GM12878 (cell line): ENCODE measurements at regions of chr14 and their contacts with region 1.

Region 1: DNA sequence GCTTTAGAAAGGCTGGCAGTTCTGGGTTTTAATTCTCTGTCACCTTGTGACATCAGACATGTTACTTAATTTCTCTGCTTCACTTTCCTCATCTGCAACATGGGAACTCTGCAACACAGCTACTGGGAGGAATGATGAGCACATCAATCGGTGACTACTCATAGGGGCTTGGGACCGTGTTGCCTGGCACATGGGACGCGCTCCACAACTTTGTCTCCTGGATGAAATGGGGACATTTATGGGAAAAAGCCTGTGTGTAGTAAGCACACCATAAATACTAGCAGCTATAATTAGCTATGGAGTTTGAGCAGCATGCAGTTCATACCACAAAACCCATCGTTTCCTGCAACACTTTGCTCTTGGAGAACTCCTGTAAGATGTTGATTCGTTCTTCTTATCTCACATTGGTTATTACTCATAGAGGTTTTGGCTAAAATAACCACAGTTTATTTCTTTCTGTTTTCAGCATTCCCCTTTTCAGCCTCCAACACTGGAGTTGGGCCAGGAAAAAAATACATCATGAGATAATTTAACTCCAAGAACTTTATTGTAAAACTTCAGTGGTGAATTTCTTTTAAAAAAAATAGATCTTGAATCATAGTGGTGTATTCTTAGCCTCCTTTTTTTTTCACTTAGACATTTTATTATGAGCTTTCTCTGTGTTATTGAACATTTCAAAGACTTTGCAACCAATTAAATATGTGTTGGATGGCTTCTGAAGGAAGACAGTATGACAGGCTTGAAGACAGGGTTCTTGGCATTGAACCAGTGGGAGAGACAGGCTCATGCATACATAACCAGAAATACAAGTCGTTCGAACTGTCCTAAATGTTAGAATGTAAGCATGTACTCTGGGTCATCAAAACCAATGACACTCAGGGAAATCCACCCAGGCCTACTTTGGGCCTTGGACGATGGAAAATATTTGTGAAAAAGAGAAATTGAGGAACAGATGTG is 72.7 kb downstream of the RIN3 start:
- DNase-seq: peak; percentile 76
- ATAC-seq: peak; percentile 36
- H3K4me3 ChIP-seq: no peak overlapping the region
- H3K27ac ChIP-seq: peak overlapping the region; percentile 32; the same call in 1 of the 2 replicates
- H3K4me1 ChIP-seq: peaks cover 71% of the 10 kb centered on the region
- H3K27me3 ChIP-seq: no peaks in the 10 kb centered on the region
- CTCF ChIP-seq: no peak
- EP300 ChIP-seq: peak; percentile 60 to 61
- POLR2A ChIP-seq: no peak
- RAD21 ChIP-seq: no peak

Region 2: DNA sequence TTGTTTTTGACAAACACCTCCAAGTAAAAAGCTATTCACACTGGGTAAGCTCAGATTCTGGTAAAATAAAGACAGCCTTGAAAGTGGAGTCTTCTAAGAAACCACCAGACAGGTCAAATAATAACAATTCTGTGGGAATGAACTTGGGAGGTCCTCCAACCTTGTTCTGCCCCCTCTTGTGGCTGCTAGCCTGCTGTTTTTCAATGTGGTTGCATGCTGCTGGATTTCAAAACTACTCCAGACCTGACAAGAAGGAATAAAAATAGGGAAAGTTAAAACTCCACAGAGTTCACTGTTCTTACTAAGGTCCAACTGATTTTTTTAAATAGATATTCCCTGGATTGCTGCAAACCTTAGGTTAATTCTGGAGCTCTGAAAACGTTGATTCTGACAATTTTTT is 104.9 kb before region 1 on chr14:
- CTCF ChIA-PET with region 1: no interaction called
- POLR2A ChIA-PET with region 1: no interaction called
- RAD21 ChIA-PET with region 1: no interaction called
- SMC1A ChIA-PET with region 1: no interaction called
- in situ Hi-C with region 1: no loop called
- intact Hi-C with region 1: no loop called
- DNase-seq: no peak
- ATAC-seq: no peak
- H3K4me3 ChIP-seq: no peak overlapping the region
- H3K27ac ChIP-seq: no peak overlapping the region
- H3K4me1 ChIP-seq: no peaks in the 10 kb centered on the region
- H3K27me3 ChIP-seq: no peaks in the 10 kb centered on the region; a peak in 1 of 4 replicates
- CTCF ChIP-seq: 0 out of 6 replicates have a peak, but pooled peaks of 1 of the 3 experiments have one; percentile 15
- EP300 ChIP-seq: no peak
- POLR2A ChIP-seq: no peak
- RAD21 ChIP-seq: no peak

Region 3: DNA sequence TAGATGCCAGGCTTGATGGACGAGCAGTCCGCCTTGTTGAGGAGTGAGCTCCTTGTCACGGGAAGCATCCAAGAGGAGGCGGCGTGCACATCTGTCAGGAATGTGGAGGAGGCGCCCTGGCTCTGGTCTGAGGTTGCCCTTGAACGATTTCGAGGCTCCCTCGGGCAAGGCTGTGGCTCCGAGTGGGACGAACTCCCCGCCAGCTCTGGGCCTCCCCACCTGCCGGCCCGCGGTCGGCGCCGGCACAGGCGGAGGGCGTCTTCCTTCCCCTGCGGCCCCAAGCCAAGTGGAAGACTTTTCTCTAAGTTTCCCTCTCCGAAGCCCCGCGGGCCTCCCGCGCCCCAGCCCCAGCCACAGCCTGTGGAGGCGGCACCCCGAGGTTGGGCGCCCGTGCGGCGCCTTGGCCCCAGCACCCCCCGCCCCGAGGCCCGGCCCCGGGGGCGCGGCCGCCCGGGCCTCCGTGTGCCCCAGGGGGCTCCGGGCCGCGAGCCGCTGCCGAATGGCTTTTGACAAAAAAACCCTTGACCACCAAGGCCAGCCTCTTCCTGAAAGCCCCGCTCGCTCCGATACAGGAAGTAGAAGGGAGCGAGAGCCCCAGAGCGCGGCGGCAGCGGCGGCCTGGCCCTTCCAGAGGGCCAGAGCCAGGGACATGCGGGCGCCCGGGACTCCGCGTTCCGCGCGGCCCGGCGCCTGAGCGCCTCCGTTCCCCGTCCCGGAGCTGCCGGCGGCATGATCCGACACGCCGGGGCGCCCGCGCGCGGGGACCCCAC is 72.9 kb before region 1 on chr14 and contains the start of gene RIN3:
- CTCF ChIA-PET with region 1: interaction called, 6 read pairs
- POLR2A ChIA-PET with region 1: interaction called, 3 read pairs
- RAD21 ChIA-PET with region 1: interaction called, 7 read pairs
- SMC1A ChIA-PET with region 1: interaction called, 18 read pairs
- in situ Hi-C with region 1: no loop called
- intact Hi-C with region 1: loop called (anchors 5 kb)
- DNase-seq: no peak
- ATAC-seq: peak; percentile 83
- H3K4me3 ChIP-seq: peak within 1 kb of the TSS; percentile 49
- H3K27ac ChIP-seq: no peak within 1 kb of the TSS; the same call in 1 of the 2 replicates
- H3K4me1 ChIP-seq: peaks cover 10% of the 10 kb centered on the region
- H3K27me3 ChIP-seq: no peaks in the 10 kb centered on the region; a peak in 1 of 4 replicates
- CTCF ChIP-seq: no peak
- EP300 ChIP-seq: no peak
- POLR2A ChIP-seq: peak; percentile 69
- RAD21 ChIP-seq: no peak
- polyA plus RNA-seq, gene RIN3: 0.91 to 0.95 TPM

Region 4: GRCh38 chr14:92568621-92569479 is 17.4 kb before region 1 on chr14:
- CTCF ChIA-PET with region 1: interaction called, 38 read pairs
- POLR2A ChIA-PET with region 1: interaction called, 8 read pairs
- RAD21 ChIA-PET with region 1: interaction called, 63 read pairs
- SMC1A ChIA-PET with region 1: interaction called, 137 read pairs
- in situ Hi-C with region 1: no loop called
- intact Hi-C with region 1: loop called (anchors 1 kb)
- DNase-seq: peak; percentile 76
- ATAC-seq: peak; percentile 93
- H3K4me3 ChIP-seq: peak overlapping the region; percentile 11; the same call in 1 of the 2 replicates
- H3K27ac ChIP-seq: peak overlapping the region; percentile 88
- H3K4me1 ChIP-seq: peaks cover 31% of the 10 kb centered on the region
- H3K27me3 ChIP-seq: no peaks in the 10 kb centered on the region
- CTCF ChIP-seq: 0 out of 6 replicates have a peak, but pooled peaks of 1 of the 3 experiments have one; percentile 1
- EP300 ChIP-seq: no peak; a peak in 1 of 4 replicates
- POLR2A ChIP-seq: peak; percentile 42; the same call in 1 of the 2 replicates
- RAD21 ChIP-seq: 0 out of 2 replicates have a peak, but pooled peaks have one; percentile 10

Region 5: GRCh38 chr14:92637228-92637627 is 51.0 kb after region 1 on chr14:
- CTCF ChIA-PET with region 1: interaction called, 4 read pairs
- POLR2A ChIA-PET with region 1: no interaction called
- RAD21 ChIA-PET with region 1: interaction called, 7 read pairs
- SMC1A ChIA-PET with region 1: interaction called, 10 read pairs
- in situ Hi-C with region 1: no loop called
- intact Hi-C with region 1: no loop called
- DNase-seq: no peak
- ATAC-seq: no peak
- H3K4me3 ChIP-seq: no peak overlapping the region
- H3K27ac ChIP-seq: no peak overlapping the region
- H3K4me1 ChIP-seq: peaks cover 3% of the 10 kb centered on the region; the same call in 1 of the 2 replicates
- H3K27me3 ChIP-seq: no peaks in the 10 kb centered on the region
- CTCF ChIP-seq: no peak
- EP300 ChIP-seq: no peak
- POLR2A ChIP-seq: no peak
- RAD21 ChIP-seq: no peak

Region 6: GRCh38 chr14:92675976-92676375 is 89.7 kb after region 1 on chr14:
- CTCF ChIA-PET with region 1: interaction called, 81 read pairs
- POLR2A ChIA-PET with region 1: interaction called, 4 read pairs
- RAD21 ChIA-PET with region 1: interaction called, 31 read pairs
- SMC1A ChIA-PET with region 1: interaction called, 63 read pairs
- in situ Hi-C with region 1: no loop called
- intact Hi-C with region 1: loop called (anchors 1 kb)
- DNase-seq: no peak
- ATAC-seq: peak; percentile 3
- H3K4me3 ChIP-seq: peak overlapping the region; percentile 39; the same call in 1 of the 2 replicates
- H3K27ac ChIP-seq: peak overlapping the region; percentile 74
- H3K4me1 ChIP-seq: peaks cover 39% of the 10 kb centered on the region
- H3K27me3 ChIP-seq: no peaks in the 10 kb centered on the region
- CTCF ChIP-seq: no peak
- EP300 ChIP-seq: no peak
- POLR2A ChIP-seq: no peak
- RAD21 ChIP-seq: no peak

Region 7: DNA sequence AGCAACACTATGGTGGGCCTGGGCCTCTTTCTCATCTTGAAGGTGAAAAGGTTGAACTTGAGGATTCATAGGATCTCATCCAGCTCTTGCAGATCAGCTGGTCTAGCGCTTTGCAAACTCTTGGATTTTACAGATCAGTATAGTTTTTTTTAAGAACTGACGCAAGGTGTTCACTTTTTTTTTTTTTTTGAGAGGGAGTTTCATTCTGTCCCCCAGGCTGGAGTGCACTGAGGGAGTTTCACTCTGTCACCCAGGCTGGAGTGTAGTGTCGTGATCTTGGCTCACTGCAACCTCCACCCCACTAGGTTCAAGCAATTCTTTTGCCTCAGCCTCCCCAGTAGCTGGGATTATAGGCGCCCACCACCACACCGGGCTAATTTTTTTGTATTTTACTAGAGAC is 182.5 kb after region 1 on chr14:
- CTCF ChIA-PET with region 1: no interaction called
- POLR2A ChIA-PET with region 1: no interaction called
- RAD21 ChIA-PET with region 1: no interaction called
- SMC1A ChIA-PET with region 1: no interaction called
- in situ Hi-C with region 1: loop called (anchors 10 kb)
- intact Hi-C with region 1: no loop called
- DNase-seq: no peak
- ATAC-seq: peak; percentile 16; the same call in 2 of the 3 replicates
- H3K4me3 ChIP-seq: no peak overlapping the region
- H3K27ac ChIP-seq: no peak overlapping the region
- H3K4me1 ChIP-seq: peaks cover 28% of the 10 kb centered on the region
- H3K27me3 ChIP-seq: peaks cover 0 to 2% of the 10 kb centered on the region in 2 experiments; a peak in 1 of 4 replicates
- CTCF ChIP-seq: no peak
- EP300 ChIP-seq: no peak
- POLR2A ChIP-seq: no peak
- RAD21 ChIP-seq: no peak

Region 8: DNA sequence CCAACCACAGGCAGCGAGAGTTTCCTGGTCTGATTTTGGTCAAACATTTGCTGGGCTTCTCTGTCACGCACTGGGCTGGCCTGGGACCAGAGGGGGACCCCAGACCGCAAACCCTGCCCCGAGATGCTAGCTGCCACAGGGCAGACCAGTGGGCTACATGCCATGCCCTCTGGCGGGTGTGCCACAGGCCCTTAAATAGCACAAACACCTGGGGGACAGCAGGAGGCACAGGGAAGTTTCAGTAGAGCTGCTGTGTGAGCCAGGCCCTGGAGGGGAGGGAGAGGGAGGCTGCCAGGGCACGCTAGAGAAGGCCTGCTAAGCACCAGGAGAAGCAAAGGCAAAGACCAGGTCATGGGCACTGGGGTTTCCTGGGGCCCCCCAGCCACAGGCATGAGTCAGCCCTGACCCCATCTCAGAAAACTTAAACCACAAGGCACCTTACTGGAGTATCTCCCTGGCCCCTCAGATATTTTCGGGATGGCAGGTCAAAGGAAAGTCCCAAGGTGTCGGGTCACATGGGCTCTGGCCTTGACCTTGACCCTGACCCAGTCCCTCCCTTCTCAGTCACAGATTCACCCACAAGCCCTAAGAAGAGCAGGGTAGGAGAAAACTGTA is 500.3 kb after region 1 on chr14:
- CTCF ChIA-PET with region 1: no interaction called
- POLR2A ChIA-PET with region 1: no interaction called
- RAD21 ChIA-PET with region 1: no interaction called
- SMC1A ChIA-PET with region 1: no interaction called
- in situ Hi-C with region 1: no loop called
- intact Hi-C with region 1: no loop called
- DNase-seq: peak; percentile 63
- ATAC-seq: peak; percentile 81
- H3K4me3 ChIP-seq: peak overlapping the region; percentile 42; the same call in 1 of the 2 replicates
- H3K27ac ChIP-seq: peak overlapping the region; percentile 67
- H3K4me1 ChIP-seq: peaks cover 35% of the 10 kb centered on the region
- H3K27me3 ChIP-seq: no peaks in the 10 kb centered on the region
- CTCF ChIP-seq: no peak
- EP300 ChIP-seq: no peak
- POLR2A ChIP-seq: no peak
- RAD21 ChIP-seq: no peak